HCT116 (cell line): ENCODE measurements at regions of chr2 and their contacts with region 1.

Region 1: DNA sequence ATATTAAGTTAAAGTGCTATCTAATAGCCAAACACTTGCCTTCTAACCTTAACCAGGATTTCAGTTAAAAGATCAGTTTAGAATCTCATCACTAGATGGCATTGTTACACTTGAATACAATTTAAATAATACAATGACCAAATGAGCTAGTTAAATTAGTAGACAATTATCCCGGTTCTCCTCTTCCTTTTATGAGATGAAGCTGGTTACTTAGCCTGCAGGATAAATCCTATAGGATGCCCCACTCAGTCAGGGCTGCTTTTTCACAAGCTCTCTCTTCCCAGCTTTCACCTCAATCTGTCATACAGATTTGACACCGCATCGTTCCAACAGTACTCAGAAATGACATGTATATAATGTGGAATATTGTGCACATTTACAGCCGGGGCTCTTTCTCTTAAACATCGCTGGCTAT is 678.8 kb downstream of the KCNJ3 start:
- DNase-seq: peak; percentile 35
- ATAC-seq: peak; percentile 70
- H3K4me3 ChIP-seq: no peak overlapping the region
- H3K27ac ChIP-seq: no peak overlapping the region
- H3K4me1 ChIP-seq: no peaks in the 10 kb centered on the region
- H3K27me3 ChIP-seq: no peaks in the 10 kb centered on the region
- CTCF ChIP-seq: peak; percentile 21 to 56 (median 52); a peak in 4 of 6 replicates
- POLR2A ChIP-seq: no peak
- RAD21 ChIP-seq: peak; percentile 84

Region 2: GRCh38 chr2:155350783-155351580 is 26.3 kb before region 1 on chr2:
- CTCF ChIA-PET with region 1: no interaction called
- POLR2A ChIA-PET with region 1: no interaction called
- RAD21 ChIA-PET with region 1: no interaction called
- intact Hi-C with region 1: no loop called
- DNase-seq: no peak
- ATAC-seq: no peak
- H3K4me3 ChIP-seq: no peak overlapping the region
- H3K27ac ChIP-seq: no peak overlapping the region
- H3K4me1 ChIP-seq: no peaks in the 10 kb centered on the region
- H3K27me3 ChIP-seq: no peaks in the 10 kb centered on the region
- CTCF ChIP-seq: no peak
- POLR2A ChIP-seq: no peak
- RAD21 ChIP-seq: no peak

Region 3: GRCh38 chr2:156057647-156058046 is 680.4 kb after region 1 on chr2:
- CTCF ChIA-PET with region 1: no interaction called
- POLR2A ChIA-PET with region 1: no interaction called
- RAD21 ChIA-PET with region 1: no interaction called
- intact Hi-C with region 1: loop called (anchors 5 kb)
- DNase-seq: no peak
- ATAC-seq: no peak
- H3K4me3 ChIP-seq: no peak overlapping the region
- H3K27ac ChIP-seq: no peak overlapping the region
- H3K4me1 ChIP-seq: no peaks in the 10 kb centered on the region
- H3K27me3 ChIP-seq: no peaks in the 10 kb centered on the region
- CTCF ChIP-seq: no peak
- POLR2A ChIP-seq: no peak
- RAD21 ChIP-seq: no peak

Region 4: GRCh38 chr2:156589381-156590079 is 1212.3 kb after region 1 on chr2:
- CTCF ChIA-PET with region 1: interaction called, 20 read pairs
- POLR2A ChIA-PET with region 1: no interaction called
- RAD21 ChIA-PET with region 1: interaction called in 1 of 2 experiments, 4 read pairs
- intact Hi-C with region 1: loop called (anchors 2 kb)
- DNase-seq: peak; percentile 27
- ATAC-seq: peak; percentile 74
- H3K4me3 ChIP-seq: no peak overlapping the region
- H3K27ac ChIP-seq: no peak overlapping the region
- H3K4me1 ChIP-seq: no peaks in the 10 kb centered on the region
- H3K27me3 ChIP-seq: no peaks in the 10 kb centered on the region
- CTCF ChIP-seq: peak; percentile 43 to 62 (median 59)
- POLR2A ChIP-seq: no peak
- RAD21 ChIP-seq: peak; percentile 88

Region 5: GRCh38 chr2:157055660-157056199 is 1678.5 kb after region 1 on chr2:
- CTCF ChIA-PET with region 1: interaction called, 8 read pairs
- POLR2A ChIA-PET with region 1: no interaction called
- RAD21 ChIA-PET with region 1: no interaction called
- intact Hi-C with region 1: loop called (anchors 2 kb)
- DNase-seq: peak; percentile 22
- ATAC-seq: no peak
- H3K4me3 ChIP-seq: no peak overlapping the region
- H3K27ac ChIP-seq: peak overlapping the region; percentile 40; the same call in 1 of the 2 replicates
- H3K4me1 ChIP-seq: peaks cover 10 to 28% of the 10 kb centered on the region in 2 experiments
- H3K27me3 ChIP-seq: no peaks in the 10 kb centered on the region
- CTCF ChIP-seq: peak; percentile 46 to 73 (median 46); a peak in 5 of 6 replicates
- POLR2A ChIP-seq: no peak
- RAD21 ChIP-seq: peak; percentile 82

Region 6: GRCh38 chr2:157327621-157328500 is 1950.6 kb after region 1 on chr2:
- CTCF ChIA-PET with region 1: interaction called, 5 read pairs
- POLR2A ChIA-PET with region 1: no interaction called
- RAD21 ChIA-PET with region 1: no interaction called
- intact Hi-C with region 1: loop called (anchors 10 kb)
- DNase-seq: peak; percentile 65
- ATAC-seq: peak; percentile 100
- H3K4me3 ChIP-seq: no peak overlapping the region
- H3K27ac ChIP-seq: no peak overlapping the region
- H3K4me1 ChIP-seq: no peaks in the 10 kb centered on the region
- H3K27me3 ChIP-seq: no peaks in the 10 kb centered on the region
- CTCF ChIP-seq: peak; percentile 50 to 97 (median 92); a peak in 5 of 6 replicates
- POLR2A ChIP-seq: no peak
- RAD21 ChIP-seq: peak; percentile 71